ENCODE measurements at regions of chr9 and their contacts with region 1.

Region 1: DNA sequence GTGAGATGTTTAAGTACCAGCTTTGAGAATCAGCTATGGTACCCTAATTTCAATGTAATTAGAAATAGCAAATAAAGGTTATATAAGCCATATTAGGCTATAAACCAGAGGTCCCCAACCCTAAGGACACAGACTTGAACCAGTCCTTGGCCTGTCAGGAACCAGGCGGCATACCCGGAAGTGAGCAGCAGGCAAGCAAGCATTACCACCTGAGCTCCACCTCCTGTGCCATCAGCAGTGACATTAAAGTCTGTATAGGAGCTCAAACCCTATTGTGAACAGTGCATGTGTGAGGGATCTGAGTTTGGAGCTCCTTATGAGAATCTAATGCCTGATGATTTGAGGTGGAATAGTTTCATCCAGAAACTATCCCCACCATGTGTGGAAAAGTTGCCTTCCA is 1009.5 kb downstream of the PTPRD start:
- DNase-seq: no peak
- H3K4me3 ChIP-seq: no peak overlapping the region
- H3K27ac ChIP-seq: no peak overlapping the region
- H3K4me1 ChIP-seq: no peaks in the 10 kb centered on the region
- H3K27me3 ChIP-seq: no peaks in the 10 kb centered on the region
- CTCF ChIP-seq: no peak
- POLR2A ChIP-seq: no peak

Region 2: GRCh38 chr9:9387511-9388115 is 215.7 kb before region 1 on chr9:
- intact Hi-C with region 1: no loop called
- DNase-seq: no peak
- H3K4me3 ChIP-seq: no peak overlapping the region
- H3K27ac ChIP-seq: no peak overlapping the region
- H3K4me1 ChIP-seq: no peaks in the 10 kb centered on the region
- H3K27me3 ChIP-seq: no peaks in the 10 kb centered on the region
- CTCF ChIP-seq: no peak
- POLR2A ChIP-seq: no peak

Region 3: DNA sequence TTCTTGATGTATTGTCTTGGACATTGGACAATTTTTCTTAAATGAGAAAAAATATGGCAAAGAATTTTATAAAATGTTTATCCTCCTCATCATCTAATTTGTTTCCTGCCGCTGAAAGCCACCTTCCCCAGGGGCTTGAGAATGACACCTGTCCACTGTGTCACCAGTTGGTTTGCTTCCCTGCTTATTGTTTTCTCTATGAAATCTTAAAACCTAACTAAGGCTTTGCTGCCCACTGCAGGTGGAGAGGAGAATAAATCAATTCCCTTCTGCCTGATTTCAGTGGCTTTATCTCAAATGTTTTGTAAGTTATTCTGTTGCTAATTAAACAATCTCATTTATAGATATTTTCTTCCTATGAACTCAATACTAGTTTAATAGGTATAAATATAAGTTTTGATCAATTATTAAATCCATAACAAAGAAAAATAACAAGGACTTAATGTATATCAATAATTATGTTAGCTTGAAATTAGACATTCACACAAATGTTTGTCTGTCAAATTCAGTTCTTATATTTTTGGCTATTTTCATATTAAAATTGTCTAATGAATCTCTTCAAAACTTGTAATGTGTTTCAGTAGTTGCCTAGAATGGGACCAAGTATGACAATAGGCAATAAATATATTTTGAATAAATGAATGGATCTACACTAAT is 187.0 kb after region 1 on chr9:
- intact Hi-C with region 1: loop called (anchors 5 to 10 kb)
- DNase-seq: peak; percentile 17 to 55 (median 23)
- H3K4me3 ChIP-seq: no peak overlapping the region
- H3K27ac ChIP-seq: no peak overlapping the region
- H3K4me1 ChIP-seq: no peaks in the 10 kb centered on the region
- H3K27me3 ChIP-seq: no peaks in the 10 kb centered on the region
- CTCF ChIP-seq: peak; percentile 58 to 78 (median 70)
- POLR2A ChIP-seq: no peak

Region 4: DNA sequence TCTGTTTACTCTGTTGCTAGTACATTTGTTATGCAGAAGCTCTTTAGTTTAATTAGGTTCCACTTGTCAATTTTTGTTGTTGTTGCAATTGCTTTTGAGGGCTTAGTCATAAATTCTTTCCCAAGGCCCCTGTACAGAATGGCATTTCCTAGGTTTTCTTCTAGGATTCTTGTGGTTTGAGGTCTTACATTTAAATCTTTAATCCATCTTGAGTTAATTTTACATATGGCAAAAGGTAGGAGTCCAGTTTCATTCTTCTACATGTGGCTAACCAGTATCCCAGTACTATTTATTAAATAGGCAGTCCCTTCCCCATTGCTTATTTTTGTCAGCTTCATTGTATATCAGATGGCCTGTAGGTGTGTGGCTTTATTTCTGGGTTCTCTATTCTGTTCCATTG is 217.1 kb after region 1 on chr9:
- intact Hi-C with region 1: no loop called
- DNase-seq: no peak
- H3K4me3 ChIP-seq: no peak overlapping the region
- H3K27ac ChIP-seq: no peak overlapping the region
- H3K4me1 ChIP-seq: no peaks in the 10 kb centered on the region
- H3K27me3 ChIP-seq: no peaks in the 10 kb centered on the region
- CTCF ChIP-seq: no peak
- POLR2A ChIP-seq: no peak

Region 5: DNA sequence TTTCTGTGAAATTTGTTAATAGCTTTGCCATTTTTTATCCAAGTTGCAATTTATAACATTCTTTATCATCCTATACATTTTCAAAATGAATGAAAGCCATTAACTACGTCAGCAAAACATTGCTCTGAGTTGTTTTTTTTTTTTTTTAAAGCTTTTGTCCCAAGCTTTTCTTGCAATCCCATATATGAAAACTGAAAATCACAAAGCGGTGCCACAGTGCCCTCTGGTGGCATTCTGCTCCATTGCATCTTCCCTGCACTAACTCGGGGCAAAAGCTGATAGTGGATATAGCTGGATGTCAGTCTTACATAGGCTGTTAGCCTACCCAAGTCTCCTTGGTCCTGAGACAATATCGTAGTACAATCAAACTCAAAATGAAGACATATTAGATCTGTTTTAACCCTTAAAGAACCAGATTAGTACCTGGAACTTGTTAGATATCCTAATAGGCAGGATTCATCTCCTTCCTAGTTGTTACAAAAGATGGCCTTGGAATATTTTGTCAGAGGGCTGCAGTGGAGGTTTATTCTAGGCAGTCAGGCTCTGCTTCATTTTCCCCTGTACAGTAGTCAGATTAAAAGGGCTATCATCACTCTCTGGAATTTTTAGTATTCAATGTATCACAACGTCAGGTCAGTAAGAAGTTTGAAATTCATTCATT is 339.5 kb after region 1 on chr9:
- intact Hi-C with region 1: loop called in 1 of 2 experiments (anchors 10 kb)
- DNase-seq: peak; percentile 43 to 85 (median 59)
- H3K4me3 ChIP-seq: no peak overlapping the region
- H3K27ac ChIP-seq: no peak overlapping the region
- H3K4me1 ChIP-seq: no peaks in the 10 kb centered on the region
- H3K27me3 ChIP-seq: no peaks in the 10 kb centered on the region
- CTCF ChIP-seq: peak; percentile 57 to 94 (median 70)
- POLR2A ChIP-seq: no peak

Region 6: GRCh38 chr9:10173561-10173960 is 570.2 kb after region 1 on chr9:
- intact Hi-C with region 1: no loop called
- DNase-seq: no peak
- H3K4me3 ChIP-seq: no peak overlapping the region
- H3K27ac ChIP-seq: no peak overlapping the region
- H3K4me1 ChIP-seq: no peaks in the 10 kb centered on the region
- H3K27me3 ChIP-seq: no peaks in the 10 kb centered on the region
- CTCF ChIP-seq: no peak
- POLR2A ChIP-seq: no peak

Measured in adrenal gland (tissue), 19 donors.